Mammary epithelial cell (primary cell): ENCODE measurements at regions of chr4 and their contacts with region 1.

Region 1: GRCh38 chr4:88706574-88706973 is 8.9 kb upstream of the NAP1L5 start:
- DNase-seq: peak; percentile 26
- H3K4me3 ChIP-seq: no peak overlapping the region
- H3K27ac ChIP-seq: no peak overlapping the region
- H3K4me1 ChIP-seq: peaks cover 4% of the 10 kb centered on the region
- H3K27me3 ChIP-seq: no peaks in the 10 kb centered on the region
- CTCF ChIP-seq: peak; percentile 52 to 59

Region 2: GRCh38 chr4:88378691-88379559 is 327.6 kb before region 1 on chr4 and contains the start of gene HERC6:
- CTCF ChIA-PET with region 1: interaction called, 22 read pairs
- dilution Hi-C with region 1: no loop called
- in situ Hi-C with region 1: no loop called
- intact Hi-C with region 1: no loop called
- DNase-seq: peak; percentile 89
- H3K4me3 ChIP-seq: peak within 1 kb of the TSS; percentile 91 to 95 (median 94)
- H3K27ac ChIP-seq: peak within 1 kb of the TSS; percentile 69
- H3K4me1 ChIP-seq: peaks cover 3% of the 10 kb centered on the region
- H3K27me3 ChIP-seq: no peaks in the 10 kb centered on the region
- CTCF ChIP-seq: peak; percentile 45 to 80
- total RNA-seq, gene HERC6: 7.6 to 10.2 TPM

Region 3: DNA sequence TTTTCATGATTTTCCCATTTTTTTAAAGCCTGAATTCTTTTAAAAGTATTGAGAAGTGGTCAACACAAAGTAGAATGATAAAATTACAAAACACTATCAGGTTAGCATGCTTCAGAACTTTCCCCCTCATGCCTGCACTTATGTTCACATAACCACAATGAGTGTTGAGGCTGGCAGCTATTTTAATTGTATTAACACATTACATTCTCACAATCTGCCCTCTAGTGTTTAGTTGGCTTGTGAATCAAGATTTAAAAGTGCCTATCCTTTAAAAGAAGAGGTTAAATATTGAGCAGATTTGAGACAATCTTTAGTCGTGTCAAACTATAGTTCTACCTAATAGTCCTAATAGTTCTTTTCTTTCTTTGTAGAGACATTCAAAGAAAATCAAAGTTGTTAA is 84.7 kb after region 1 on chr4:
- CTCF ChIA-PET with region 1: no interaction called
- dilution Hi-C with region 1: no loop called
- in situ Hi-C with region 1: no loop called
- intact Hi-C with region 1: loop called (anchors 1 kb)
- DNase-seq: peak; percentile 42
- H3K4me3 ChIP-seq: no peak overlapping the region
- H3K27ac ChIP-seq: peak overlapping the region; percentile 94
- H3K4me1 ChIP-seq: peaks cover 30% of the 10 kb centered on the region
- H3K27me3 ChIP-seq: no peaks in the 10 kb centered on the region
- CTCF ChIP-seq: peak; percentile 31 to 36

Region 4: DNA sequence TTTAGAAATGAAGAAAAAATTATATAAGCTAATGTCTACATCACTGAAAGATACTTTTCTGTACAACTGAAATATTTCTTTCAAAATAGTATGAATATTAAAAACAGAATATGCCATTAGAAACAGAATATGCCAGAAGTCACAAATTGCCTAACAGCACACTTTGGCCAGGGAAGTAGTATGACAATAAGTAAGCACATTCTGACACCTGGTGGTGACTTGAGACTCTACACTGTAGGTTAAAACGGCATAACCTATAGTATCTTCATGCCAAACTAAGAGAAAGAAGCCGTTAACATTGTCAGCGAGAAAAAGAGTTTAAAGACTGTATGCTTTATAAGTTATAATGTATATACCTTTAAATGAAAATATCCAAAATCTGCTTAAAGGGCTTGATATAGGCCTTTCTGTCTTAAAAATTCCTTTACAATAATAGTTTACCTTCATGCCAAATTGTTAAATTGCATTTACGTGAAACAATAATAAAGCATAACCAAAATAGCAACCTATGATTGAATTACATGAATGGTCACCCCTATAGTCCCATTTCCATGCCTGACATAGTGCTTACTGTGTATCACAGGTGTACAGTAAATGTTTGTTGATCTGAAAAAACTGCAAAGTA is 317.6 kb after region 1 on chr4:
- CTCF ChIA-PET with region 1: no interaction called
- dilution Hi-C with region 1: no loop called
- in situ Hi-C with region 1: no loop called
- intact Hi-C with region 1: loop called (anchors 2 kb)
- DNase-seq: peak; percentile 60
- H3K4me3 ChIP-seq: no peak overlapping the region
- H3K27ac ChIP-seq: no peak overlapping the region
- H3K4me1 ChIP-seq: no peaks in the 10 kb centered on the region
- H3K27me3 ChIP-seq: no peaks in the 10 kb centered on the region
- CTCF ChIP-seq: peak; percentile 74